ENCODE measurements at regions of chr12 and their contacts with region 1.

Region 1: DNA sequence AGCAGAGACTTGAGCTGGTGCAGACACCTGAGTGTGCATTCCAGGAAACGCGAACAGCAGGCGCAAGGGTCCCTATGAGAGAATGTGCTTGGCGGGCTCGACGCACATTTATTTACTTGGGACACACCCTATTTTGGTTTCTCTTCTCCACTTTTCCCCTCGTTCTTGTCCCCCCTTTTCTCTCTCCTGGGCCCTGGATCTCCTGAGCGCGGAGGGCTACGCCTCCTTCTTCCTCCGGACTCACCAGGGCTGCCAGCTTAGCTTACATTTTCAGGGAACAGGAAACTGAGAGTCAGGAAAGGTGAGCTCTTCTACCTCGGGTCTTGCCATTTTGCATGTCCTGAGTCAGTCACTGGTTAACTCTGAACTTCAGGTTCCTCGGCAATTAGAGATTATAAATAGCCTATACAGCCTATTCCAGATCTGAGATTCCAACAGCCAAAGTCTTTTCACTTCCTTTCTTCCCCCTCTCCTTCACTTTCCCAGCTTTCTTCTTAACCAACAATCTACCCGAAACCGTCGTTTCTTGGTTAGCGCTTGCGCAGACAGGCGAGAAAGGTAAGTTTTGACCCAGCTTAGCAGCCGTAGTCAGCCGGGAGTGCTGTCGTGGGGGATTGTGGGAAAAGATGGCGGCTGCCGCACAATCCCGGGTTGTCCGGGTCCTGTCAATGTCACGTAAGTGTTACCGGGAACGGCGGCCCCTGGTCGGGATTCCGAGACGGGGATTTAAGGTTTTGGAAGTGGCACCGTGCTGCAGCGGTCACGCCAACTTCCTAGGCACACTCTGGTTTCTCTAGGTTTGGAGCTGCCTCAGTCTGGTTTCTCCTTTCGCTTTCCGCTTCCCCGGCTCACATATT is at the starts of genes AKAP3 and NDUFA9:
- DNase-seq: peak; percentile 89
- H3K4me3 Mint-ChIP-seq: peak within 1 kb of the TSS; percentile 93
- H3K27ac Mint-ChIP-seq: peak within 1 kb of the TSS; percentile 90
- H3K4me1 Mint-ChIP-seq: peaks cover 41% of the 10 kb centered on the region
- H3K27me3 Mint-ChIP-seq: no peaks in the 10 kb centered on the region
- total RNA-seq, gene AKAP3: 2.9 to 3.1 TPM
- total RNA-seq, gene NDUFA9: 119 to 122 TPM

Region 2: GRCh38 chr12:4604684-4605193 is 44.0 kb before region 1 on chr12:
- CTCF ChIA-PET with region 1: interaction called, 16 read pairs
- POLR2A ChIA-PET with region 1: no interaction called
- intact Hi-C with region 1: loop called (anchors 1 kb)
- DNase-seq: peak; percentile 88
- H3K4me3 Mint-ChIP-seq: peak overlapping the region; percentile 99
- H3K27ac Mint-ChIP-seq: peak overlapping the region; percentile 88
- H3K4me1 Mint-ChIP-seq: peaks cover 17% of the 10 kb centered on the region
- H3K27me3 Mint-ChIP-seq: peaks cover 15% of the 10 kb centered on the region

Region 3: DNA sequence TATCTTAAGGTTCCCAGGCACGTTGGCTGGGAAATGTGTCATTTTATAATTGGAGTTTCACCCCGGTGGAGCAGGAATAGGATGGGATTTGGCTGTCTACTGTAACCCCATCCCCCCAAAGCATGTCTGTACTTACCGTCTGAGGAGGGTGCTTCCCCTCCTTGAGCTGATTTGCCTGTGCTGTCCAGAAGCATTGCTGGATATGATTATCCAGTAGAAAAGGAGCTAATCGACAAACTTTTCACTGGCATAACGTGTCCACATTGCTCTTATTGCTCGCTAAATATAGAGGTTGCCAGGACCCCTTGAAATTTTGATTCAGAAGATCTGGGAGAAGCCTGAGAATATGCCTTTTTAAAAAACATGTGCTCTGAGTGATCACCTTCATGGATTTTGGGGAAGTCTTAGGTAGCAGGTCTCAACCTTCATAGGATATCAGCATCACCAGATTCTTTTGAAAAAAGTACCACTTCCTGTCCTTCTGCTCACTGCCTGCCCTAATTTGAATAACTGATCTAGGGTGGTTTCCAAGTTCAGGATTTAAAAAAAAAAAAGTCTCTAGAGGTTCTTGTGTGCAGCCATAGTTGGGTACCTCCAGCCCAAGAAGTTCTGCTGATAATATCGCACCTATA is 180.5 kb after region 1 on chr12:
- CTCF ChIA-PET with region 1: no interaction called
- POLR2A ChIA-PET with region 1: no interaction called
- intact Hi-C with region 1: loop called (anchors 5 kb)
- DNase-seq: peak; percentile 18
- H3K4me3 Mint-ChIP-seq: peak overlapping the region; percentile 71
- H3K27ac Mint-ChIP-seq: peak overlapping the region; percentile 85
- H3K4me1 Mint-ChIP-seq: peaks cover 60% of the 10 kb centered on the region
- H3K27me3 Mint-ChIP-seq: no peaks in the 10 kb centered on the region